Activated naive CD4-positive, alpha-beta T cell treated with anti-CD3 and anti-CD28 coated beads for 36 hours (primary cell): ENCODE measurements at regions of chr11 and their contacts with region 1.

Region 1: GRCh38 chr11:44621140-44621681 is 55.7 kb downstream of the CD82 start:
- DNase-seq: peak; percentile 68
- H3K4me3 Mint-ChIP-seq: no peak overlapping the region
- H3K27ac Mint-ChIP-seq: no peak overlapping the region
- H3K4me1 Mint-ChIP-seq: peaks cover 39% of the 10 kb centered on the region
- H3K27me3 Mint-ChIP-seq: no peaks in the 10 kb centered on the region

Region 2: DNA sequence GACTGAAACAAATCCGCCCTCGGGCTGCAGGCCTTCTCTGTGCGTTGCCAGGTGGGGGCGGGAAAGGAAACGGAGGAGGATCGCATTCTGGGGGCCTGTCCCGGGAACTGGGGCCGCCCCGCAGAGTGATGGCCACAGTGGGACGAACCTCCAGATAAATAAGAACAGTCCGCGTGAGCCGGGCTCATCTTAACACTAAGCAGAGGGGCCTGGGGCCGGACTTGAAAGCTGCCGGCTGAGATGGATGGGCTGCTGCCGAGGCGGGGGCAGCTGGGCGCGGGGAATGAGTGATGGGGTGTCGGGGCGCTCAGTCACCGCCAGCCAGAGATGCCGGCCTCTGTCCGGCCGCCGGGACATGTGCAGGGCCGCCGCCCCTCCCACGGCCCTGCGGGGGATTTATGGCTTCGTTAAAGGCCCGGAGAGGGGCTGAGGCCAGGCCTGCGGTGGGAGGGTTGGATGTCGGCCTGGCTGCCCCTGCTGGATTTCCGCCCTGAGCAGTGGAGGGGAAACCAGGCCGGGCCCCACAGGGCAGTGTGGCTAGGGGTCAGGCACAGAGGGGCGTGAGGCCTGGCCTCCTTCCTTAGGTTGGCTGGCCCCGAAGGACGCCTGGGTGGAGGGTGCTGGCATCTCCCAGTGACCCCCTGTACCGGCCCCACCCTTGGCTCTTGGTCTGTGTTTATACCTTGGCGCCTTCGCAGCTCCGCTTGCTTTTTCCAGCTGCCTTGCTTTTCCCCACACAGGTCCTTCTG is 101.0 kb before region 1 on chr11:
- CTCF ChIA-PET with region 1: interaction called, 17 read pairs
- intact Hi-C with region 1: loop called (anchors 1 kb)
- DNase-seq: no peak
- H3K4me3 Mint-ChIP-seq: no peak overlapping the region
- H3K27ac Mint-ChIP-seq: no peak overlapping the region
- H3K4me1 Mint-ChIP-seq: no peaks in the 10 kb centered on the region
- H3K27me3 Mint-ChIP-seq: peaks cover 9% of the 10 kb centered on the region

Region 3: DNA sequence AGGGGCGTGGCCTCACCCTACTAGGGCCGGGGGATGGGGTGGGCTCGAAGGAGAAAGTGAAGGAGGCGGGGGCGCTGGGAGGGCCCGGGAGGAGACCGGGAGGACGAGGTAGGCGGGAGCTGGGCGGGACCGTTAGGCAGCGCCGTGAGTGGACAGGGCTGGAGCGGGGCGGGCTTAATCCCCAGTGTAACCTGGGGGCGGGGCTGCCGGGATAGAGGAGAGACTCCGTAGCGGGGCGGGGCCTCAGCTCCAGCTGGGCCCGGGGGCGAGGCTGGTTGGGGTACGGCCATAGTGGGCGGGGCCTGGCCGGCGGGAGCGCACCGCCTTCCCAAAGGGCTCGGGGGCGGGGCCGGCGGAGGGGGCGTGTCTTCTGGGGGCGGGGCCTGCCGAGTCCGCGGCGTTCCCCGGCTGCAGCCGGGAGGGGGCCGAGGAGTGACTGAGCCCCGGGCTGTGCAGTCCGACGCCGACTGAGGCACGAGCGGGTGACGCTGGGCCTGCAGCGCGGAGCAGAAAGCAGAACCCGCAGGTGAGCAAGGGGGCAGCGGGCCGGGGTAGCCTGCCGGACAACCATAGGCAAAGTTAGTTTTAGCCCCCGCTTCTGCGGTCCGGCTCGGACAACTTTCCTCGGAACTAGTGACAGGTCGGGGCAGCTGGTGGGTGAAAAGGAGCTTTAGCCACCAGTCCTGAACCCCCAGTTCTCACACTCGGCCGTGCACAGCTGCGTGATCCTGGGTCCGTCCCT is 55.8 kb before region 1 on chr11 and contains the start of gene CD82:
- CTCF ChIA-PET with region 1: interaction called, 366 read pairs
- intact Hi-C with region 1: no loop called
- DNase-seq: peak; percentile 99
- H3K4me3 Mint-ChIP-seq: peak within 1 kb of the TSS; percentile 83
- H3K27ac Mint-ChIP-seq: peak within 1 kb of the TSS; percentile 93
- H3K4me1 Mint-ChIP-seq: peaks cover 51% of the 10 kb centered on the region
- H3K27me3 Mint-ChIP-seq: no peaks in the 10 kb centered on the region
- total RNA-seq, gene CD82: 140 to 141 TPM

Region 4: DNA sequence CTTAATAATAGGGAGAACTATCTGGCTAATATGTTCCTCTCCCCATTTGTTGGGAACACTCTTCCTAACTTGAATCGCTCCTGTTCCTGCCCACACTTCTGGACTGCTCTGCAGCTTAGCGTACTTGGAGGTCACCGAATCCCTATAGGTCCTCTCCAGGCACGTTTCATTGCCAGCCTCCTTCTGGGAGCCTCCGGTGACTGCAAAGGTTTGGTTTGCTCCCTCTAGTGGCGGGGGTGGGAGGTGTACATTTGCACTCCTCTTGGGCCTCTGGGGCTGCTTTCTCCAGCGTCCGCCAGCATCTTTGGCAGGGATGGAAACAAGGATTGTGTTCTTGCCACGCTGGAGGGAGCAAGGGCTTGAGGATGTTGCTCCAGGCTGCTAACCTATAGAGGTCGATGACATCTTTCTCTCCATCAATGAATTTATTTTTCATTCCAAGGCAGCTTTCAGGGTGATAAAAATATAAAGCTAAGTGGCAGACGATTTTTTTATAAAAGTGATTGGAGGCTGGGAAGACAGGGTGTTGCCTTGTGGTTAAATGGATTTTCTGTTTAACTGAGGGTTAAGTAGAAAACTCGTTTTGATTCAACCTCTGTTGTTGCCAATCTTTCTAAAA is 154.3 kb after region 1 on chr11:
- CTCF ChIA-PET with region 1: interaction called, 7 read pairs
- intact Hi-C with region 1: loop called (anchors 1 kb)
- DNase-seq: peak; percentile 82
- H3K4me3 Mint-ChIP-seq: no peak overlapping the region
- H3K27ac Mint-ChIP-seq: no peak overlapping the region
- H3K4me1 Mint-ChIP-seq: peaks cover 7% of the 10 kb centered on the region
- H3K27me3 Mint-ChIP-seq: no peaks in the 10 kb centered on the region

Region 5: GRCh38 chr11:44911029-44911814 is 290.0 kb after region 1 on chr11:
- CTCF ChIA-PET with region 1: interaction called, 15 read pairs
- intact Hi-C with region 1: loop called (anchors 1 kb)
- DNase-seq: peak; percentile 96
- H3K4me3 Mint-ChIP-seq: no peak overlapping the region
- H3K27ac Mint-ChIP-seq: no peak overlapping the region
- H3K4me1 Mint-ChIP-seq: peaks cover 3% of the 10 kb centered on the region
- H3K27me3 Mint-ChIP-seq: no peaks in the 10 kb centered on the region

Region 6: GRCh38 chr11:44927174-44927661 is 306.0 kb after region 1 on chr11:
- CTCF ChIA-PET with region 1: no interaction called
- intact Hi-C with region 1: no loop called
- DNase-seq: peak; percentile 69
- H3K4me3 Mint-ChIP-seq: no peak overlapping the region
- H3K27ac Mint-ChIP-seq: no peak overlapping the region
- H3K4me1 Mint-ChIP-seq: no peaks in the 10 kb centered on the region
- H3K27me3 Mint-ChIP-seq: no peaks in the 10 kb centered on the region